CD8-positive, alpha-beta T cell (primary cell): ENCODE measurements at regions of chr16 and their contacts with region 1.

Region 1: GRCh38 chr16:20900299-20901067 is at the starts of genes DCUN1D3 and LYRM1:
- DNase-seq: peak; percentile 63 to 96 (median 85)
- ATAC-seq: peak; percentile 73
- H3K4me3 ChIP-seq: peak within 1 kb of the TSS; percentile 80 to 95
- H3K4me3 Mint-ChIP-seq: peak within 1 kb of the TSS; percentile 96
- H3K27ac ChIP-seq: peak within 1 kb of the TSS; percentile 93 to 99
- H3K27ac Mint-ChIP-seq: peak within 1 kb of the TSS; percentile 98
- H3K4me1 ChIP-seq: peaks cover 40% of the 10 kb centered on the region
- H3K4me1 Mint-ChIP-seq: peaks cover 69% of the 10 kb centered on the region
- H3K27me3 ChIP-seq: no peaks in the 10 kb centered on the region
- H3K27me3 Mint-ChIP-seq: no peaks in the 10 kb centered on the region
- CTCF ChIP-seq: no peak
- total RNA-seq, gene DCUN1D3: 2.3 to 2.6 TPM
- total RNA-seq, gene LYRM1: 12.4 to 12.7 TPM

Region 2: DNA sequence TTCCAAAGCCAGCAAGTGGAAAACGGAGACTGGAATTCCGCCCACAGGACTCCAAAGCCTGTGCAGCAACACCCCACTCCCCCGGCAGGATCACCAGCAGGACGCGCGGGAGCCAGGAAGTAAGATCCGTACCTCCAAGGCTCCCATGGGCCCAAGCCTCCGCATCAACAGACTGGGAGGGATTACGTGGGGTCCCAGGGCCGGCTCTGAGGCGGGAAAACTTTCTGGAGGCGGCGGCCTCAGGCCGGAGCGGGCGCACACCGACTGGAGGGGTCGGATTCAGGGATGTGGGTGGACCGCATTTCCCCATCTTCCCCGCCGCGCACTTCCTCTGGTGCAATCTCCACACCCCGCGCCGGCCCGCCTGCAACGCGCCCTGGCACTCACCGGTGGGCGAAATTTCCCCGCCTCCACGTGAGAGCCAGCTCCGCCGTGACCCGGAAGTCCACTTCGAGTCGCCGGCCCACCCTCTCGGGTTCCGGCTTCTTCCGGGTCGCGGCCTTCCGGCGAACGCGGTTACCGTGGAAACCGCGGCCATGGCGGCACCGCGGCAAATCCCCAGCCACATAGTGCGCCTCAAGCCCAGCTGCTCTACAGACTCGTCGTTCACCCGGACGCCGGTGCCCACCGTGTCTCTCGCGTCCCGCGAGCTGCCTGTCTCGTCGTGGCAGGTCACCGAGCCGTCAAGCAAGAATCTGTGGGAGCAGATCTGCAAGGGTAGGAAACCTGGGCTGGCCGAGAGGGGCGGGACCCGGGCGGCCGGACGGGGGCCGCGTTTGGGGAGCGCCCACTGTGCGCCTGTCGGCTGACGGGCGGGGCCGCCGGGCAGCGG is 1182.5 kb before region 1 on chr16 and contains the starts of genes IQCK and KNOP1:
- CTCF ChIA-PET with region 1: no interaction called
- POLR2A ChIA-PET with region 1: no interaction called
- intact Hi-C with region 1: loop called in 1 of 2 experiments (anchors 5 kb)
- DNase-seq: peak; percentile 72 to 97 (median 86)
- ATAC-seq: peak; percentile 89
- H3K4me3 ChIP-seq: peak within 1 kb of the TSS; percentile 80 to 95
- H3K4me3 Mint-ChIP-seq: peak within 1 kb of the TSS; percentile 91
- H3K27ac ChIP-seq: peak within 1 kb of the TSS; percentile 49 to 64
- H3K27ac Mint-ChIP-seq: peak within 1 kb of the TSS; percentile 71
- H3K4me1 ChIP-seq: peaks cover 6% of the 10 kb centered on the region
- H3K4me1 Mint-ChIP-seq: peaks cover 32% of the 10 kb centered on the region
- H3K27me3 ChIP-seq: no peaks in the 10 kb centered on the region
- H3K27me3 Mint-ChIP-seq: no peaks in the 10 kb centered on the region
- CTCF ChIP-seq: no peak
- total RNA-seq, gene IQCK: 0.72 to 2.1 TPM
- total RNA-seq, gene KNOP1: 3.4 to 3.6 TPM

Region 3: GRCh38 chr16:20806168-20807050 is 94.1 kb before region 1 on chr16 and contains the starts of genes ERI2 and REXO5:
- CTCF ChIA-PET with region 1: no interaction called
- POLR2A ChIA-PET with region 1: interaction called, 3 read pairs
- intact Hi-C with region 1: loop called in 1 of 2 experiments (anchors 1 kb)
- DNase-seq: peak; percentile 43 to 85 (median 74)
- ATAC-seq: peak; percentile 91
- H3K4me3 ChIP-seq: peak within 1 kb of the TSS; percentile 75 to 77
- H3K4me3 Mint-ChIP-seq: peak within 1 kb of the TSS; percentile 98
- H3K27ac ChIP-seq: peak within 1 kb of the TSS; percentile 42 to 77
- H3K27ac Mint-ChIP-seq: peak within 1 kb of the TSS; percentile 82
- H3K4me1 ChIP-seq: peaks cover 10% of the 10 kb centered on the region
- H3K4me1 Mint-ChIP-seq: peaks cover 18% of the 10 kb centered on the region
- H3K27me3 ChIP-seq: no peaks in the 10 kb centered on the region
- H3K27me3 Mint-ChIP-seq: no peaks in the 10 kb centered on the region
- CTCF ChIP-seq: peak; percentile 21
- total RNA-seq, gene ERI2: 0.14 TPM in 1 of 2 experiments, not detected in the other
- total RNA-seq, gene REXO5: 0.38 to 0.42 TPM

Region 4: GRCh38 chr16:20874088-20874581 is 26.3 kb before region 1 on chr16:
- CTCF ChIA-PET with region 1: interaction called, 3 read pairs
- POLR2A ChIA-PET with region 1: interaction called, 11 read pairs
- intact Hi-C with region 1: loop called in 1 of 2 experiments (anchors 1 kb)
- DNase-seq: no peak
- ATAC-seq: no peak
- H3K4me3 ChIP-seq: no peak overlapping the region
- H3K4me3 Mint-ChIP-seq: peak overlapping the region; percentile 75
- H3K27ac ChIP-seq: peak overlapping the region; percentile 44 to 78
- H3K27ac Mint-ChIP-seq: peak overlapping the region; percentile 88
- H3K4me1 ChIP-seq: peaks cover 22% of the 10 kb centered on the region
- H3K4me1 Mint-ChIP-seq: peaks cover 36% of the 10 kb centered on the region
- H3K27me3 ChIP-seq: no peaks in the 10 kb centered on the region
- H3K27me3 Mint-ChIP-seq: no peaks in the 10 kb centered on the region
- CTCF ChIP-seq: no peak